ENCODE measurements at regions of chr18 and their contacts with region 1.

Region 1: DNA sequence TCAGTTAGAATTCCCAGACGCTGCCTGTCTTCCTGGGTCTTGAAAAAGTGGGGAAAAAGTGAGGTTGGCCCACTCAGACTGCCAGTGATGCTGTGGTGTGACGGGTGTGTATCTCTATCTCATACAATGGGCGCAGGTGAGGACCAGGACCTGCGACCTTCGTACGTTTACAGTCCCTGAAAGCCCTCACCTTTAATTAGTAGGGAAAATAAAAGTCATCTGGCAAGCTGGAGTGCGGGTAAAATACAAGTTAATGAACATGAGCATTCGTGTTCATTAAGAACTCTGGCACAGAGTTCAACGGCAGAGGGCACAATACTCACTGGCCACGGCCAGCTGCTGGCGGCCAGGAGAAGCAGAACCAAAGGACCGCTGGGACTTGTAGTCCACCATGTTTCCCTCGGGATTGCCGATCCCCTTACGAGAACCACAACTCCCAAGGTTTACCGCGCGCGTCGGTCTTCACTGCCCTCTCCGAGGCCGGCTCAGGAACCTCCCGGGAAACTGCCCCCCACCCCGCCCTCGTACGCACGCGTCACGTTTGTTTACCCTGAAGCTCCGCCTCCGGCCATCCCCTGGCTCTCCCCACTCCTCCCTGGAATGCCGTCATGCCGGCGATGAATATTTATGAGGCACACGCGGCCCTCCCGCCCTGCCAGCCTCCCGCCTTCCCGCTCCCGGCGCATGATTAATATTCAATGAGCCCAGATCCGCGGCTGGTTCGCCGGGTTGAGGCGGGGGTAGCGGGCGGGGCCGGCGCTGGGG is 488 bp upstream of the PHLPP1 start:
- DNase-seq: peak; percentile 100
- H3K4me3 ChIP-seq: peak overlapping the region; percentile 21 to 76 (median 45)
- H3K27ac ChIP-seq: peak overlapping the region; percentile 88
- H3K4me1 ChIP-seq: peaks cover 20% of the 10 kb centered on the region
- H3K27me3 ChIP-seq: peaks cover 0 to 2% of the 10 kb centered on the region in 2 experiments
- CTCF ChIP-seq: peak; percentile 73 to 79
- POLR2A ChIP-seq: no peak

Region 2: DNA sequence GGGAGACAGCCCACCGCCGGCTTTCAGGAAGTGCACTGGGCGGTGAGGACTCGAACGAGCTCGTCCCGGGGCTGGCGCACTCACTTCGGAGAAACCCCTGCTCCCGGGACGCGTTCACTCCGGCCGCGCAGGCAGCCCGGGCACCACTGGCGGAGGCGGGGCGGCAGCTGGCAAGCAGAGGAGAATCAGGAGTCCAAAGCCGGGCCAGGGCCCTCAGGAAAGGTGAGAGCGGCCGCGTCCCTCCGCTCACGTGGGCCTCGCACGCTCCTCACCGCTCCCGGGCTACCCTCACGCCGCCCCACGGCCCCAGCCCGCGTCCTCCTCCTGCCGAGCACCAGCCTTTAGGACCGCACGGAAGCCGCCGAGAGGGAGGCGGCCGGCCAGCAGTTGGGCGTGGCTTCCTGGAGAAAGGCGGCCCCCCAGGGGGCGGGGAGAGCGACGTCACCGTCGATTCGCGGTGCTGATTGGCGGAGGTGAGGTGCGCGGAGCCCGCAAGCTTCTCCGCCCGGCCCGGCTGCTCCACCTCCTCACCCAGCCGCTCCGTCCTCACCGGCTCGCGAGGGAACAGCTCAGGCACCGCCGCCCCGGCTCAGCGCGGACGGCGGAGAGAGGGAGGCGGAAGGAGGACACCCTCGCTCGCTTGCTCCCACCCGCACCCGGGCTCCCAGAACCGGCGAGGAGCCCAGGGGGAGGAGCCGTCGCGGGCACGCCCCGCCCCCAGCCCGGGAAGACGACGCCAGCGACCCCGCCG is 192.2 kb before region 1 on chr18 and contains the start of gene ZCCHC2:
- CTCF ChIA-PET with region 1: no interaction called
- POLR2A ChIA-PET with region 1: no interaction called
- dilution Hi-C with region 1: no loop called
- intact Hi-C with region 1: loop called (anchors 5 kb)
- DNase-seq: peak; percentile 99
- H3K4me3 ChIP-seq: peak within 1 kb of the TSS; percentile 85 to 98 (median 96)
- H3K27ac ChIP-seq: peak within 1 kb of the TSS; percentile 94
- H3K4me1 ChIP-seq: peaks cover 30% of the 10 kb centered on the region
- H3K27me3 ChIP-seq: no peaks in the 10 kb centered on the region
- CTCF ChIP-seq: no peak
- POLR2A ChIP-seq: peak; percentile 79
- total RNA-seq, gene ZCCHC2: 20.6 and 27.2 TPM in 2 replicates

Region 3: DNA sequence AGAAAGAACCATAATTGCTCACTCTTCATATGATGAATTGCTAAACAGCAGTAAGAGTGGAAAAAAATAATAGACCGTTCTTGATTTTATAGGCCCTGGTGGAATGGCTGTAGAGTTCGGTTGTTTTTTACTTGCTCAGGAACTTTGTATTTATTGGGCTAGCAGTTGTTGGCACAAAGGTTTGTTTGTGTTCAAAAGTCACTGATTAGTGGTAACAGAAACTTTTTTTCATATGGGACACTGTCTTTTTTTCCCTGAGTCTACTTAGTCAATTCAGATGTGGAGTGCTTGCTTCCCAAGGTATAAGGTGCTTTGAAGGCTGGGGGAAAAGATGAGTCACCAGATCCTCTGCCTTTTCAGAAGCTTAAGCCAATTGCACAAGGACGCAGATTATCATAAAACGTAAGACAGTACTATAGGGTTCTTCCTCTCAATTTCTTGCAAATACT is 26.3 kb after region 1 on chr18:
- CTCF ChIA-PET with region 1: interaction called, 4 read pairs
- POLR2A ChIA-PET with region 1: no interaction called
- dilution Hi-C with region 1: no loop called
- intact Hi-C with region 1: loop called (anchors 1 kb)
- DNase-seq: peak; percentile 47
- H3K4me3 ChIP-seq: no peak overlapping the region
- H3K27ac ChIP-seq: no peak overlapping the region
- H3K4me1 ChIP-seq: peaks cover 2% of the 10 kb centered on the region
- H3K27me3 ChIP-seq: no peaks in the 10 kb centered on the region
- CTCF ChIP-seq: no peak
- POLR2A ChIP-seq: no peak

Region 4: DNA sequence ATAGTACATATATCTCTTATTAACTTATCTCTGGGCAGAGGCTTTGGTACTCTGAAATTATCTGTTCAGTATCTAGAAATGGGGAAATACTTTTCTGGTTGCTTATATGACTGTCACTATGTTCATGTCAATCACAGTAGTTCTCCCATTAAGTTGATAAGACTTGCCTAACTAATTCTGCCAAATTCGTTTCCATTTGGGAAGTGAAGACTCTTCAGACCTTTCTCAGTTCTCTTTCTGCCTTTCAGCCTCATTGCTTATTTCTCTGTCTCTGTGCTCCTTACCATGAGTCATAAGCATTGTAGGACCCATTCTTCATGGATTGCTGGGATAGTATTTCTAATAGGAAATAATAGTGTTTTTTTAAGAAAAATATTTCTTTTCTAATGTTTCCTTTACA is 114.0 kb after region 1 on chr18:
- CTCF ChIA-PET with region 1: interaction called, 5 read pairs
- POLR2A ChIA-PET with region 1: no interaction called
- dilution Hi-C with region 1: no loop called
- intact Hi-C with region 1: loop called (anchors 5 kb)
- DNase-seq: peak; percentile 50
- H3K4me3 ChIP-seq: no peak overlapping the region
- H3K27ac ChIP-seq: no peak overlapping the region
- H3K4me1 ChIP-seq: peaks cover 17% of the 10 kb centered on the region
- H3K27me3 ChIP-seq: no peaks in the 10 kb centered on the region
- CTCF ChIP-seq: no peak
- POLR2A ChIP-seq: no peak

Region 5: DNA sequence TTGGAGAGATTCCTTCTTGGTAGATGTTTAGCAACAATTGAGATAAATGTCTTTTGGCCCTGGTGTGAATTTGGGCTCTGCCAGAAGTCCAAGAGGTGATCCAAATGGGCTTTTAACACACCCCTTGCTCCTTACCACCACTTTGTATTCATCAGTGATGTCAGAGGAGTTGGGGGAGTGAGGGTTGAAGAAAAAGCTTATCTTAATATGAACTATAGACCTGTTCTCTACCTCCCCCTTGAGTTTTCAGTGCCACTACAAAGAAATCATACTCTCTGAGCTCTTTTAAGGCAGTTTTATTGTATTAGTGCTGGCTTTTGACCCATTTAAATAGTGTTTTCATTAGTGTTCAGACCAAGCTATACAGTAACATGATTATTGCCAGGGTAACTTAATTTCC is 229.6 kb after region 1 on chr18:
- CTCF ChIA-PET with region 1: interaction called, 19 read pairs
- POLR2A ChIA-PET with region 1: no interaction called
- dilution Hi-C with region 1: no loop called
- intact Hi-C with region 1: loop called (anchors 5 kb)
- DNase-seq: peak; percentile 38
- H3K4me3 ChIP-seq: no peak overlapping the region
- H3K27ac ChIP-seq: no peak overlapping the region
- H3K4me1 ChIP-seq: peaks cover 6% of the 10 kb centered on the region
- H3K27me3 ChIP-seq: no peaks in the 10 kb centered on the region
- CTCF ChIP-seq: no peak
- POLR2A ChIP-seq: no peak

Region 6: DNA sequence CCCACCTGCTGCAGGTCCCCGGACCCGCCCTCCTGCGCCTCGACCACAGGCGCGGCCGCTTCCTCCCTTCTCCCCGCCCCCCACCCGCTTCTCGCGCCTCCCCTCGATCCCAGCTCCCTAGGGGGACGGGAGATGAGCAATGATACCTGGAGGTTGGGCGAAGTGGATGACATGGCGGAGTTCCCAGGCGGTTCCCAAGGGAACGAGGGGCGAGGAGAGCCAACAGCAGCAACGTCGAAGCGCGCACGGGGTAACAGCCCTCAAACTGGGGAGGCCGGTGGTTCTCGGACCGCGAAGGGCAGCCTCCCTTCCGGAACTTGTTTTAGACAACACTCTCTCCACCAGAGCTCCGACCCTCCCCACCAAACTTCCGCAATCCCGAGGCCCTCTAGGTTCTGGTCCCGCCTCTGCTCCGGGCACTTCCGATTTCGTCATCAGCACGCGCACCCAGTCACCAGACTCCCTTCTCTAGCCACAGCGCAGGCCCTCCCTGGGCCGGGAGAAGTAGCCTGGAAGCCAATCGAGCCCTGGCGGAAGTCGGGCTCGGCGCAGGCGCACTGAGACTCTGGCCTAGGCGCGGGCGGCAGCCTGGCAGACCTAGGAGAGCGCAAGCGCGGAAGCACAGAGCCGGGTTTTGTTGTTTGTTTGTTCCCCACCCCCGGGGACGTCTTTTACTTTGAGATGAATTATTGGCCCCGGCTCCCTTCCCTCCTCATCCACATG is 707.4 kb after region 1 on chr18 and contains the start of gene VPS4B:
- CTCF ChIA-PET with region 1: no interaction called
- POLR2A ChIA-PET with region 1: no interaction called
- dilution Hi-C with region 1: no loop called
- intact Hi-C with region 1: loop called (anchors 1 kb)
- DNase-seq: peak; percentile 100
- H3K4me3 ChIP-seq: peak within 1 kb of the TSS; percentile 67 to 95 (median 83)
- H3K27ac ChIP-seq: peak within 1 kb of the TSS; percentile 69
- H3K4me1 ChIP-seq: peaks cover 10% of the 10 kb centered on the region
- H3K27me3 ChIP-seq: peaks cover 2 to 3% of the 10 kb centered on the region in 2 experiments
- CTCF ChIP-seq: no peak
- POLR2A ChIP-seq: peak; percentile 79
- total RNA-seq, gene VPS4B: 50.2 and 54.7 TPM in 2 replicates

Measured in endothelial cell of umbilical vein (primary cell).